ENCODE measurements at regions of chr5 and their contacts with region 1.

Region 1: GRCh38 chr5:67209142-67209771 is 12.7 kb upstream of the CD180 start:
- DNase-seq: peak; percentile 87
- H3K4me3 ChIP-seq: no peak overlapping the region
- H3K27ac ChIP-seq: no peak overlapping the region
- H3K4me1 ChIP-seq: peaks cover 55% of the 10 kb centered on the region
- CTCF ChIP-seq: peak; percentile 85

Region 2: GRCh38 chr5:66144074-66144833 is 1065.0 kb before region 1 on chr5 and contains the start of gene SREK1:
- CTCF ChIA-PET with region 1: no interaction called
- POLR2A ChIA-PET with region 1: no interaction called
- intact Hi-C with region 1: loop called (anchors 10 kb)
- DNase-seq: peak; percentile 93
- H3K4me3 ChIP-seq: peak within 1 kb of the TSS; percentile 76
- H3K27ac ChIP-seq: peak within 1 kb of the TSS; percentile 82
- H3K4me1 ChIP-seq: peaks cover 21% of the 10 kb centered on the region
- CTCF ChIP-seq: no peak
- total RNA-seq, gene SREK1: 101 and 225 TPM in 2 replicates

Region 3: GRCh38 chr5:66933066-66933465 is 276.2 kb before region 1 on chr5:
- CTCF ChIA-PET with region 1: no interaction called
- POLR2A ChIA-PET with region 1: interaction called, 4 read pairs
- intact Hi-C with region 1: loop called (anchors 5 kb)
- DNase-seq: no peak
- H3K4me3 ChIP-seq: no peak overlapping the region
- H3K27ac ChIP-seq: no peak overlapping the region
- H3K4me1 ChIP-seq: peaks cover 18% of the 10 kb centered on the region
- CTCF ChIP-seq: no peak

Region 4: DNA sequence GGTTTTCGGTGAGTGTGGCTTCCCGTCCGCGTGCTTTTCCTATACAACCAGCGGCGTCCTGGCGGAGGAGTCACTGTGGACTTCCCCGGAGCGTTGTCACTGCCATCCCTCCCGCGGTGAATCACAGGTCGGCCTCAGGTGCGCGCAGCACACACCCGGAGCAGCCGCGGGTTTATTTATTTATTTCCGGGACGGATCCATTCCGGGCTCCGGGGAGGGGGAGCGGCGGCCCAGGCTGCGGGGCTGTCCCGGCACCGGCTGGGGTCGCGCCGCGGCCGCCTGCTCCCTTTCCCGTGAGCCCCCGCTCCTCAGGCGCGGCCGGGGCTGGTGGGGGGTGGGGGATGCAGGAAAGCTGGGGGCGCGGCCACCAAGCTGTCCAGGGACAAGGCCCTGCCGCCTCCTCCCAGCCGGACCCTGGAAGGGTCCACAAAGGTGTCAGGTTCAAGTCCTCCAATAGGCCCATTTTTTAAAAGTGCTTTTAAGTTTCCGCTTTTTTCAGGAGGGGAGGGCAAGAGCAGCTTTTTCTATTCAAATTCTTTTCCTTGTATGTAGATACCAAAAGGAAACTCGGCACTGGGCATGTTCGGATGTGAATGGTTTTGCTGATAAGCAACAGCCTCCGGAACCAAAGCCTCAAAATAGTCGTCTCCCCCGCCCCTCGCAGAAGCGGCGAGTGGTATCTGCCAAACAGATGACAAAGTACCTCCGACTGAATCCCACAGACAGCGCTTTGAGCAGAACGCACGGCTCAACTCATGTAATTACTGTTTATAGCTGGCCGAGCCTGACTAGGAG is 205.1 kb before region 1 on chr5:
- CTCF ChIA-PET with region 1: no interaction called
- POLR2A ChIA-PET with region 1: no interaction called
- intact Hi-C with region 1: loop called (anchors 2 kb)
- DNase-seq: peak; percentile 92
- H3K4me3 ChIP-seq: peak overlapping the region; percentile 72
- H3K27ac ChIP-seq: peak overlapping the region; percentile 41
- H3K4me1 ChIP-seq: peaks cover 20% of the 10 kb centered on the region
- CTCF ChIP-seq: no peak

Region 5: GRCh38 chr5:67165526-67166459 is 43.5 kb before region 1 on chr5:
- CTCF ChIA-PET with region 1: interaction called, 4 read pairs
- POLR2A ChIA-PET with region 1: interaction called, 48 read pairs
- intact Hi-C with region 1: loop called (anchors 1 kb)
- DNase-seq: peak; percentile 89
- H3K4me3 ChIP-seq: peak overlapping the region; percentile 28
- H3K27ac ChIP-seq: peak overlapping the region; percentile 50
- H3K4me1 ChIP-seq: peaks cover 17% of the 10 kb centered on the region
- CTCF ChIP-seq: peak; percentile 84

Region 6: GRCh38 chr5:67196537-67197059 is 12.7 kb before region 1 on chr5 and contains the start of gene CD180:
- CTCF ChIA-PET with region 1: interaction called, 5 read pairs
- POLR2A ChIA-PET with region 1: interaction called, 30 read pairs
- intact Hi-C with region 1: no loop called
- DNase-seq: peak; percentile 80
- H3K4me3 ChIP-seq: peak within 1 kb of the TSS; percentile 69
- H3K27ac ChIP-seq: peak within 1 kb of the TSS; percentile 75
- H3K4me1 ChIP-seq: peaks cover 91% of the 10 kb centered on the region
- CTCF ChIP-seq: no peak
- total RNA-seq, gene CD180: 11.1 and 14.4 TPM in 2 replicates

Measured in OCI-LY7 (cell line).